ENCODE measurements at regions of chr6 and their contacts with region 1.

Region 1: GRCh38 chr6:13795041-13795750 is 19.2 kb downstream of the MCUR1 start:
- DNase-seq: peak; percentile 76 to 85 (median 79)
- ATAC-seq: peak; percentile 58 to 90 (median 88)
- H3K4me3 ChIP-seq: no peak overlapping the region
- H3K27ac ChIP-seq: no peak overlapping the region
- H3K4me1 ChIP-seq: peaks cover 0 to 5% (median 0%) of the 10 kb centered on the region in 12 donors
- H3K27me3 ChIP-seq: no peaks in the 10 kb centered on the region
- CTCF ChIP-seq: peak; percentile 85 to 97 (median 92)
- POLR2A ChIP-seq: no peak

Region 2: DNA sequence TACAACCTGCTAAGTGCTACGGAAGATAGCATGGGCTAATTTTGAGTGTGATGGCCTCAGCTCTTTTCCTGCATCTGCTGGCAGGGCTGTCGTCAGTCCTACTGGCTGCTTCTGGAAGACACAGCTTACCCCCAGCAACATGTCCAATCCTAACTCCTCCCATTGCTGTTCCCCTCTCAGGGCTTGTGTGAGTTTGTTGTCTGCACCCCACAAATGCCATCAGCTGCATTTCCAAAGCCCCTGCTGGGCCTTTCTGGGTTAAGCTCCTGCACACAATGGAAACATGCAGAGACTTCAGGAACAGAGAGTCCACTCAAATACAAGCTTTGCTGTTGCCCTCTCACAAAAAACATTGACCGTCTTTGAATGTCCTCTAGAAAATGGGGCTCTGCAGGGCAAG is 214.2 kb after region 1 on chr6:
- intact Hi-C with region 1: no loop called
- DNase-seq: no peak
- ATAC-seq: no peak
- H3K4me3 ChIP-seq: no peak overlapping the region
- H3K27ac ChIP-seq: no peak overlapping the region
- H3K4me1 ChIP-seq: no peaks in the 10 kb centered on the region
- H3K27me3 ChIP-seq: peaks cover 0 to 39% (median 0%) of the 10 kb centered on the region in 9 donors
- CTCF ChIP-seq: no peak
- POLR2A ChIP-seq: no peak

Region 3: DNA sequence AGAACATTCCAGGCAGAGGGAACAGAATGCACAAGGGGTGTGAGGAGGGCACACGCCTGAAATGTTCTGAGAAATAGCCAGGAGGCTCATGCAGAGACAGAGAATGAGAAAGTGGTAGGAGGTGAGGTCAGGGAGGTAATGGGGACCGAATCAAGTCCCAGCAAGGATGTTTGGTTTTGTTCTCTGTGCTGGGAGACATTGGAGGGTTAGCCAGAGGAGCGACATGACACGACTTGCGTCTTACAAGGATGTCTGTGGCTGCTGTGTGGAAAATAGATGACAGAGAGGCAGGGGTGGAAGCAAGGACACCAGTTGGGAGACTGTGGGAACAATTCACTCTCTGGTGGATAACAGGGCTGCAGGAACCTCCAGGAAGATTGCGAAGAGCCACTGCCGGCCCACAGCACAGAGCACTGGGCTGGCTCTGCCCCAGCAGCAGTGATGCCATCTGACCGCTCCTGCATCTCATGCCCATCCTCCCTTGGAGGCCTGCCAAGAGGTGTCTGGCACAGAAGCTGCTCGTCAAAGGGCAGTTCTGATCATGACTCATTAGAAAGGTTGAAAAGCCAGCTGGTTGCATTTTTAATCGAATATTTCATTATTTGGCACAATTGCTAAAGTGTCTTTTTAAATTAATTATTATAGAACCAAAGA is 264.7 kb after region 1 on chr6:
- intact Hi-C with region 1: loop called in 8 of 10 experiments (anchors 5 to 10 kb)
- DNase-seq: peak; percentile 46 to 81 (median 64)
- ATAC-seq: peak; percentile 64 to 91 (median 82)
- H3K4me3 ChIP-seq: no peak overlapping the region
- H3K27ac ChIP-seq: no peak overlapping the region
- H3K4me1 ChIP-seq: peaks cover 0 to 5% (median 0%) of the 10 kb centered on the region in 12 donors
- H3K27me3 ChIP-seq: peaks cover 0 to 8% (median 0%) of the 10 kb centered on the region in 9 donors
- CTCF ChIP-seq: no peak
- POLR2A ChIP-seq: no peak

Region 4: GRCh38 chr6:14066782-14067406 is 271.7 kb after region 1 on chr6:
- intact Hi-C with region 1: loop called (anchors 2 to 10 kb)
- DNase-seq: no peak
- ATAC-seq: peak; percentile 32 to 84 (median 75)
- H3K4me3 ChIP-seq: no peak overlapping the region
- H3K27ac ChIP-seq: no peak overlapping the region
- H3K4me1 ChIP-seq: peaks cover 0 to 7% (median 0%) of the 10 kb centered on the region in 12 donors
- H3K27me3 ChIP-seq: peaks cover 0 to 4% (median 0%) of the 10 kb centered on the region in 9 donors
- CTCF ChIP-seq: peak; percentile 49 to 78 (median 66)
- POLR2A ChIP-seq: no peak